ENCODE measurements at regions of chr4 and their contacts with region 1.

Region 1: GRCh38 chr4:116143198-116143597 is 942.2 kb downstream of the TRAM1L1 start:
- DNase-seq: no peak
- H3K4me3 ChIP-seq: no peak overlapping the region
- H3K27ac ChIP-seq: no peak overlapping the region
- H3K4me1 ChIP-seq: no peaks in the 10 kb centered on the region
- H3K27me3 ChIP-seq: no peaks in the 10 kb centered on the region
- CTCF ChIP-seq: no peak

Region 2: GRCh38 chr4:116055857-116056827 is 87.1 kb before region 1 on chr4:
- CTCF ChIA-PET with region 1: no interaction called
- POLR2A ChIA-PET with region 1: no interaction called
- intact Hi-C with region 1: loop called (anchors 10 kb)
- DNase-seq: no peak
- H3K4me3 ChIP-seq: no peak overlapping the region
- H3K27ac ChIP-seq: no peak overlapping the region
- H3K4me1 ChIP-seq: no peaks in the 10 kb centered on the region
- H3K27me3 ChIP-seq: no peaks in the 10 kb centered on the region
- CTCF ChIP-seq: peak; percentile 53

Region 3: DNA sequence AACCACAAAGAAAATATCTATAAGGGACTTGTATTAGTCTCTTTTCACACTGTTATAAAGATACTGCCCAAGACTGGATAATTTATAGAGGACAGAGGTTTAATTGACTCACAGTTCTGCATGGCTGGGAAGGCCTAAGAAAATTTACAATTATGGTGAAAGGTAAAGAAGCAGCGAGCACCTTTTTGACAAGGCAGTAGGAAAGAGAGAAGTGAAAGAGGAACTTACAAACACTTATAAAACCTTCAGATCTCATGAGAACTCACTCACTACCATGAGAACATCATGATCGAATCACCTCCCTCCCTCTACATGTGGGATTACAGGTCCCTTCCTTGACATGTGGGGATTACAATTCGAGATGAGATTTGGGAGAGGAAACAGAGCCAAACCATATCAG is 86.2 kb after region 1 on chr4:
- CTCF ChIA-PET with region 1: no interaction called
- POLR2A ChIA-PET with region 1: no interaction called
- intact Hi-C with region 1: no loop called
- DNase-seq: no peak
- H3K4me3 ChIP-seq: no peak overlapping the region
- H3K27ac ChIP-seq: no peak overlapping the region
- H3K4me1 ChIP-seq: no peaks in the 10 kb centered on the region
- H3K27me3 ChIP-seq: no peaks in the 10 kb centered on the region
- CTCF ChIP-seq: no peak

Region 4: GRCh38 chr4:116328261-116328860 is 185.2 kb after region 1 on chr4:
- CTCF ChIA-PET with region 1: no interaction called
- POLR2A ChIA-PET with region 1: no interaction called
- intact Hi-C with region 1: no loop called
- DNase-seq: no peak
- H3K4me3 ChIP-seq: no peak overlapping the region
- H3K27ac ChIP-seq: no peak overlapping the region
- H3K4me1 ChIP-seq: no peaks in the 10 kb centered on the region
- H3K27me3 ChIP-seq: no peaks in the 10 kb centered on the region
- CTCF ChIP-seq: no peak

Region 5: DNA sequence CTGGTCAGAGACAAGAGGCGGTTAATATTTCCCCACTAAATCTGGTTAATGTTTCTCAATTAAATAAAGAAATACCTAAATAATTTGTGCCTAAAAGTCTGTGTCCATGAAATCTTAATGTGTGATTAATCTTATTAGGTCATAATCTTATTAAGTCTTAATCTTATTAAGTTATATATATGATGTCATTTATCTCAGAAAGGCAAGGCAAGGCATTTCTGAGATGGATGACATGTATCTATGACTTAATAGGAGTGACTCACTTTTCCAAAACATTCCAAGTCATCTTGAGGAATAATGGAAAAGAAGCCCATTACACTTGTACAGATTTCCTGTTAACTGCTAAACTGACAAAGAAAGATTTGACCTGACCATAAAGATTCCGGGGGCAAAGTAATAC is 867.5 kb after region 1 on chr4:
- CTCF ChIA-PET with region 1: no interaction called
- POLR2A ChIA-PET with region 1: no interaction called
- intact Hi-C with region 1: no loop called
- DNase-seq: no peak
- H3K4me3 ChIP-seq: no peak overlapping the region
- H3K27ac ChIP-seq: no peak overlapping the region
- H3K4me1 ChIP-seq: no peaks in the 10 kb centered on the region
- H3K27me3 ChIP-seq: no peaks in the 10 kb centered on the region
- CTCF ChIP-seq: no peak